ENCODE measurements at regions of chr12 and their contacts with region 1.

Region 1: DNA sequence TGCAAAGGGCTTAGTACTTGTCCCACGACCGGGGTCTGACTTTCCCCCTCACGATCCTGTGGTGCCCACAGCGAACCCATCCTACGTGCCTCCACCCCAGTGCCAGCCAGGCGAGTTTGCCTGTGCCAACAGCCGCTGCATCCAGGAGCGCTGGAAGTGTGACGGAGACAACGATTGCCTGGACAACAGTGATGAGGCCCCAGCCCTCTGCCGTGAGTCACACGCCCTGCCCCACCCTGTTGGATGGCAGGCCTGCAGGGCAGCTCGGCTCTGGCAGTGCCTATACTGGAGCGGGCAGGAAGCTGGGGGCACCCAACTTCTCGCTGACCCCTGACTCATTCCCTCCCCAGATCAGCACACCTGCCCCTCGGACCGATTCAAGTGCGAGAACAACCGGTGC is 18.3 kb upstream of the LRP1-AS start:
- DNase-seq: peak; percentile 92
- ATAC-seq: peak; percentile 89
- H3K4me3 ChIP-seq: peak overlapping the region; percentile 21; the same call in 1 of the 2 replicates
- H3K27ac ChIP-seq: peak overlapping the region; percentile 87
- H3K4me1 ChIP-seq: peaks cover 35% of the 10 kb centered on the region
- H3K27me3 ChIP-seq: no peaks in the 10 kb centered on the region
- CTCF ChIP-seq: no peak

Region 2: DNA sequence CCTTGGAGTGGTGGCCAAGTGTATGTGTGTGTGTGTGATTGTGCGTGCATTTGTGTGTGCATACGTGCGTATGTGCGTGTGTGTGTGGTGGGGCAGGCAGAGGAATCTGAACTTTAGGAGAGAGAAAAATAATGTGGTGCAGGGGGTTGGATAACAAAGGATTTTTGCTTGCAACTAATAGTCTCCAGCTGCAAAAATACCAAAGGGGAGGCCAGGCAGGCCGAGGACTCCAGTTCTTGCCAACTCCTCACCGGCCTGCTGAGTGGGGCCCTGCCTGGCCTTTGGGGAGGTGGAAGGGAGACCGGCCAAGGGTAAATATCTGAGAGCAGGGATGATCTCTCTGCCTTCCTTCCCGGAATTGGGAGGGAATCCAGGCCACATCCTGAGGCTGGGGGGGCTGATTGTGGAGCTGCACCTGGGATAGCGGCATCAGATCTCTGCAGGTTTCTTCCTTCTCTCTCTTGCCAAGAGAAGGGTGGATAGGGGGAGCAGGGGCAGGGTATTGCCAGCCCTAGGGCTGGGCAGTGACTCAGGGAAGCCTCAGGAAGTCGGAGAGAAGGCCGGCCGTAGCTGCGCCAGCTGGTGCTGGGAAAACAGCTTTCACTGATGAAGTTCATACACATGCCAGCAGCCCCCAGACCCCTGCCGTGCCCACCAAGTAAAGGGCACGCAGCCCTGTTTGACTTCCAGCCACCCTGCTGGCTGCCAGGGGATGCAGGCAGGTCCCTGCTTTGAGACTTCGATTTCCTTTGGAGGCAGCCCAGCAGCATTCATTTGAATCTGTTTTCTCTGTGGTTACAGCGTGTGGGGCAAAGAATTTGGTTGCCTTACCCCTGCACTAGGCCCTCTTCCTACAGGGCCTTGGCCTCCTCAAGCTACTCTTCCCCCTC is 13.7 kb before region 1 on chr12:
- CTCF ChIA-PET with region 1: no interaction called
- POLR2A ChIA-PET with region 1: no interaction called
- intact Hi-C with region 1: loop called (anchors 1 kb)
- DNase-seq: peak; percentile 81
- ATAC-seq: peak; percentile 97
- H3K4me3 ChIP-seq: peak overlapping the region; percentile 23; the same call in 1 of the 2 replicates
- H3K27ac ChIP-seq: peak overlapping the region; percentile 83
- H3K4me1 ChIP-seq: peaks cover 28% of the 10 kb centered on the region
- H3K27me3 ChIP-seq: no peaks in the 10 kb centered on the region
- CTCF ChIP-seq: 0 out of 2 replicates have a peak, but pooled peaks have one; percentile 21

Region 3: DNA sequence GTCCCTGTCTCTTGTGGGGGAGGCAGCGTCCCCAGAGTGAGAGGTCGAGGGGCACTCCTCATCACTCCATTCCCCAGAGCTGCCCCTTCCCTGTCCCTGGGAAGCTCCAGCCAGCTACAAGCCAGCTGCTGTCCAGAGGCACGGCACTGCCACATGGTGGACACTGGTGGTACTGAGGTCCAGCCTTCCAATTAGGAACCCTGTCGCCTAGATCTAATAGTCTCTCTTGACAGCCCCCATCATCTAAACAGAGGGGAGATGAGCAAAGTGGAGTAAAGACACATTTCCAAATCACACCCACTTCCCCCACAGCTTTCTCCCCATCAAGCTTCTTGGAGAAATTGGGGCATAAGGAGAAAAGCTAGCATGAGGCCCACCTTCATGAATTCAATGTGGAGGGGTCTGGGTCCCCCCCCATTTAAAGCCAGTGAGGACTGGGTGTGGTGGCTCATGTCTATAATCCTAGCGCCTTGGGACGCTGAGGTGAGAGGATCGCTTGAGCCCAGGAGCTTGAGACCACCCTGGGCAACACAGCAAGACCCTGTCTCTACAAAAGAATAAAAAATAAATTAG is 287.3 kb after region 1 on chr12:
- CTCF ChIA-PET with region 1: no interaction called
- POLR2A ChIA-PET with region 1: no interaction called
- intact Hi-C with region 1: no loop called
- DNase-seq: peak; percentile 86
- ATAC-seq: peak; percentile 73
- H3K4me3 ChIP-seq: no peak overlapping the region
- H3K27ac ChIP-seq: peak overlapping the region; percentile 64
- H3K4me1 ChIP-seq: peaks cover 18% of the 10 kb centered on the region
- H3K27me3 ChIP-seq: no peaks in the 10 kb centered on the region
- CTCF ChIP-seq: peak; percentile 94

Measured in PC-3 (cell line).